Activated naive CD4-positive, alpha-beta T cell treated with anti-CD3 and anti-CD28 coated beads for 36 hours (primary cell): ENCODE measurements at regions of chr7 and their contacts with region 1.

Region 1: GRCh38 chr7:123682690-123683089 is 27.0 kb downstream of the LMOD2 start:
- DNase-seq: peak; percentile 31
- H3K4me3 Mint-ChIP-seq: no peak overlapping the region
- H3K27ac Mint-ChIP-seq: no peak overlapping the region
- H3K4me1 Mint-ChIP-seq: no peaks in the 10 kb centered on the region
- H3K27me3 Mint-ChIP-seq: no peaks in the 10 kb centered on the region

Region 2: DNA sequence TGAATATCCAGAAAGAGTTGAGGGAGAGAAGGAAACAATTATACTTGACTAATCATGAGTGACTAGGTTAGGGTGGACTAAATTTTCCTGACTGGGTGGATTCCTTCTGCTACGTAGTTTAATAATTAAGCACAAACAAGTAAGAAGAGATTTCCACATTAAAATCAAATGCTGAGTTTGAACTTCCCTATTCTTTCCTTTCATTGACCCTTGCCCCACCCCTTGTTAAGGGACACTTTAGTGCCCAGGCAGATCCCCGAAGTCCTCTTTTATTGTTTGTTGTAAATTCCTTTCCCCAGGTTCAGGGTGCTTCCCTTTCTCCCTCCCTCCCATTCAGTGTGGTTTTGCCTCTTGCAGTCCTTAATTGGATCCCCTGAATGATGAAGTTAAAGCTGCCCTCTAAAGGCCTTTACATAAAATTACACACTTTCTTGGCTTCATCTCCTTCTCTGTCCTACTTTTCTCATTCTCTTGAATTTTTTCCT is 233.6 kb after region 1 on chr7:
- CTCF ChIA-PET with region 1: no interaction called
- intact Hi-C with region 1: loop called (anchors 2 kb)
- DNase-seq: no peak
- H3K4me3 Mint-ChIP-seq: no peak overlapping the region
- H3K27ac Mint-ChIP-seq: no peak overlapping the region
- H3K4me1 Mint-ChIP-seq: no peaks in the 10 kb centered on the region
- H3K27me3 Mint-ChIP-seq: peaks cover 6% of the 10 kb centered on the region